ENCODE measurements at regions of chr10 and their contacts with region 1.

Region 1: GRCh38 chr10:86399879-86400704 is 33.5 kb upstream of the GRID1 start:
- DNase-seq: peak; percentile 95
- H3K4me3 ChIP-seq: peak overlapping the region; percentile 69
- H3K27ac ChIP-seq: no peak overlapping the region
- H3K4me1 ChIP-seq: peaks cover 14% of the 10 kb centered on the region
- H3K27me3 ChIP-seq: peaks cover 30% of the 10 kb centered on the region
- CTCF ChIP-seq: peak; percentile 91

Region 2: GRCh38 chr10:84966708-84967459 is 1433.2 kb before region 1 on chr10:
- CTCF ChIA-PET with region 1: no interaction called
- POLR2A ChIA-PET with region 1: no interaction called
- intact Hi-C with region 1: no loop called
- DNase-seq: no peak
- H3K4me3 ChIP-seq: no peak overlapping the region
- H3K27ac ChIP-seq: no peak overlapping the region
- H3K4me1 ChIP-seq: no peaks in the 10 kb centered on the region
- H3K27me3 ChIP-seq: no peaks in the 10 kb centered on the region
- CTCF ChIP-seq: peak; percentile 4; the same call in 1 of the 2 replicates

Region 3: GRCh38 chr10:85864173-85864549 is 535.9 kb before region 1 on chr10:
- CTCF ChIA-PET with region 1: no interaction called
- POLR2A ChIA-PET with region 1: no interaction called
- intact Hi-C with region 1: no loop called
- DNase-seq: no peak
- H3K4me3 ChIP-seq: no peak overlapping the region
- H3K27ac ChIP-seq: no peak overlapping the region
- H3K4me1 ChIP-seq: no peaks in the 10 kb centered on the region
- H3K27me3 ChIP-seq: peaks cover 17% of the 10 kb centered on the region
- CTCF ChIP-seq: no peak

Region 4: GRCh38 chr10:86411281-86411841 is 11.3 kb after region 1 on chr10:
- CTCF ChIA-PET with region 1: no interaction called
- POLR2A ChIA-PET with region 1: interaction called, 12 read pairs
- intact Hi-C with region 1: no loop called
- DNase-seq: peak; percentile 51
- H3K4me3 ChIP-seq: no peak overlapping the region
- H3K27ac ChIP-seq: no peak overlapping the region
- H3K4me1 ChIP-seq: peaks cover 8% of the 10 kb centered on the region
- H3K27me3 ChIP-seq: no peaks in the 10 kb centered on the region
- CTCF ChIP-seq: no peak

Region 5: GRCh38 chr10:86461963-86462804 is 62.1 kb after region 1 on chr10:
- CTCF ChIA-PET with region 1: no interaction called
- POLR2A ChIA-PET with region 1: no interaction called
- intact Hi-C with region 1: no loop called
- DNase-seq: no peak
- H3K4me3 ChIP-seq: no peak overlapping the region
- H3K27ac ChIP-seq: peak overlapping the region; percentile 4
- H3K4me1 ChIP-seq: no peaks in the 10 kb centered on the region
- H3K27me3 ChIP-seq: no peaks in the 10 kb centered on the region
- CTCF ChIP-seq: no peak

Region 6: GRCh38 chr10:86585037-86585725 is 185.1 kb after region 1 on chr10:
- CTCF ChIA-PET with region 1: interaction called, 13 read pairs
- POLR2A ChIA-PET with region 1: no interaction called
- intact Hi-C with region 1: loop called (anchors 1 kb)
- DNase-seq: peak; percentile 76
- H3K4me3 ChIP-seq: no peak overlapping the region
- H3K27ac ChIP-seq: no peak overlapping the region
- H3K4me1 ChIP-seq: no peaks in the 10 kb centered on the region
- H3K27me3 ChIP-seq: no peaks in the 10 kb centered on the region
- CTCF ChIP-seq: peak; percentile 98

Measured in A673 (cell line).